ENCODE measurements at regions of chr7 and their contacts with region 1.

Region 1: GRCh38 chr7:135291809-135292253 is 58.2 kb downstream of the STRA8 start:
- DNase-seq: peak; percentile 97
- H3K4me3 ChIP-seq: no peak overlapping the region
- H3K27ac ChIP-seq: peak overlapping the region; percentile 100
- H3K4me1 ChIP-seq: peaks cover 22% of the 10 kb centered on the region
- H3K27me3 ChIP-seq: no peaks in the 10 kb centered on the region
- CTCF ChIP-seq: no peak
- POLR2A ChIP-seq: peak; percentile 73

Region 2: DNA sequence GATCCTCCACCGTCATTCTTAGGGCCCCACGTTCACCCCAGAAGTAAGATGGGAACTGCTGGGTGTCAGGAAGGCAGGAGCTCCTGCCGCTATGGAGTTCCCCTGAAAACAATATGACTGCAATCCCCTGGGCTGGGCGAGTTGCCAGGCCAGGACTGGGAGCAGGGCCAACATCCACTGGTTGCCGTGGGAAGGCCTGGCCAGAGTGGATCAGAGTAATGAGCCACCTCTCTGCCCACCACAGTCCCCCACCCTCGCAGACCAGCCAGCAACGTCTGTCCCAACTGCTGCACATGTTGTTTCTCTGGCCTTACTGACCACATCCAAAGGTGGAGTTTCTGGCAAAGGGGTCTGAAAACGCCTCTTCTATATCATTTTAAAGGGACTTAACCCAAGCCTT is 28.4 kb after region 1 on chr7:
- CTCF ChIA-PET with region 1: interaction called, 4 read pairs
- POLR2A ChIA-PET with region 1: no interaction called
- dilution Hi-C with region 1: no loop called
- intact Hi-C with region 1: loop called (anchors 2 kb)
- DNase-seq: peak; percentile 97
- H3K4me3 ChIP-seq: no peak overlapping the region
- H3K27ac ChIP-seq: peak overlapping the region; percentile 16
- H3K4me1 ChIP-seq: peaks cover 11% of the 10 kb centered on the region
- H3K27me3 ChIP-seq: no peaks in the 10 kb centered on the region
- CTCF ChIP-seq: no peak
- POLR2A ChIP-seq: no peak

Region 3: DNA sequence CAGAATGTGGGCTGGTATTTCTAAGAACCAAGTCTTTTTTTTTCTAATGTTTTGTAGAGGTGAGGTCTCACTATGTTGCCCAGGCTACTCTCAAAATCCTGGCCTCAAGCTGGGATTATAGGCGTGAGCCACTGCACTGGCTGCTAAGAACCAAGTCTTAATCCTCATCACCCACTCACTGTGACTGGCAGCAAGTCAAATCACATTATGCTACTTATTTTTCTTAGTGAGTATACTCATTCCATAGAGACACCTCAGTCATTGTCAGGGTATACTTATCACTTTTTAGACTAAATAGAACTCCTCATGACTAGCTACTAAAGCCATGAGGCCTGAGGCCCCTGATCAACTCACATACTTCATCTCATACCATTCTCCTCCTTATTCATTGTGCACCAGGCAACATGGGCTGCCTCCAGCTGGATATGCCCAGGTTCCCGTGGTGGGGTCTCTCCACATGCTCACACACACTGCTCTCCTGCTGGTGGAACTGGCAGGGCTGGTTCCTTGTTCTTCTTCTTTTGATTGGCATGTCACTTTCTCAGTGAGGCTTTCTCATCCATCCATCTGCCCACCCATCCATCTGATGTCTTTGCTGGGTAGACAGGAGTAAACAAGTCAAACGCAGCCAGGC is 58.0 kb after region 1 on chr7:
- CTCF ChIA-PET with region 1: no interaction called
- POLR2A ChIA-PET with region 1: no interaction called
- dilution Hi-C with region 1: no loop called
- intact Hi-C with region 1: no loop called
- DNase-seq: no peak
- H3K4me3 ChIP-seq: no peak overlapping the region
- H3K27ac ChIP-seq: no peak overlapping the region
- H3K4me1 ChIP-seq: no peaks in the 10 kb centered on the region
- H3K27me3 ChIP-seq: peaks cover 0 to 6% of the 10 kb centered on the region in 2 experiments
- CTCF ChIP-seq: no peak
- POLR2A ChIP-seq: no peak

Measured in endothelial cell of umbilical vein (primary cell).